Mammary epithelial cell (primary cell): ENCODE measurements at regions of chr4 and their contacts with region 1.

Region 1: DNA sequence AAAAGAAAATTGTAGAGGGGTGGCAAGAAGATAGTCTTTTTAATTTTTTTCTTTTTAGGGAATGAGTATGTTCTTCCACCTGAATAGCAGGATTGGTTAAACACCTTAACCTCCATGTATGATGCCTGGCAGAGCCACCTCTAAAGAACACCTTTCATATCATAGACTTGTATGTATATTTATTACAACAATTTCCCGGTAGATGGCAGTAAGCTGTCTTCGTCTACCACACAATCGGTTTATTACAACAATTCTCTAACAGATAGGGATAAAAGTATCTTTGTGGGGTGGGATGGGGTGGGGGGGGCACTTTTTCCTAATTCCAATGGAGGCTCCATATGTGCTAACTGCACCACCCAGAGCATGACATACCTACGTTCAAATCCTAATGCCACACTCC is 255.6 kb downstream of the LDB2 start:
- DNase-seq: no peak
- H3K4me3 ChIP-seq: no peak overlapping the region
- H3K27ac ChIP-seq: no peak overlapping the region
- H3K4me1 ChIP-seq: no peaks in the 10 kb centered on the region
- H3K27me3 ChIP-seq: no peaks in the 10 kb centered on the region
- CTCF ChIP-seq: peak; percentile 4 to 37

Region 2: DNA sequence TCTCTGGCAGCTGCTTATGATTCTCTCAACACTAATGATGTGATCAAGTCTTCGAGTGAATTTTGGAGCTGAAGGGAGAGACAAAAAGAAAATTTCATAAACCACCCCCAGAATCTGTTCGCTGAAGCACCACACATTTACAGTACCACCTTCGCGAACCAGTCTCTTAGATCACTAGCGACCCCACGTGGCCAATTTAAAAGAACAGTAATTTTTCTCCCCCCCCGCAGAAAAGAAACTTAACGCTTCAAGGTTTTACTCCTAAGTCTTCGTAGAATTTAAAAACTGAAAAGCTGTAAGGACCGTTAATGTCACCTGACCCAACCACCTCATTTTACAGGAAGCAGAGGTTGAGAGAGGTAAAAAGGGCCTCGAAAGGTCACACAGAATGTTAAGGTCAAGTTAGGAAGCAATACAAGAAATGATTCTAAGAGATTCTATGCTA is 681.5 kb after region 1 on chr4:
- CTCF ChIA-PET with region 1: no interaction called
- dilution Hi-C with region 1: no loop called
- in situ Hi-C with region 1: no loop called
- intact Hi-C with region 1: loop called (anchors 1 kb)
- DNase-seq: no peak
- H3K4me3 ChIP-seq: no peak overlapping the region
- H3K27ac ChIP-seq: no peak overlapping the region
- H3K4me1 ChIP-seq: no peaks in the 10 kb centered on the region
- H3K27me3 ChIP-seq: no peaks in the 10 kb centered on the region
- CTCF ChIP-seq: peak; percentile 40 to 54

Region 3: GRCh38 chr4:17447675-17448298 is 804.9 kb after region 1 on chr4:
- CTCF ChIA-PET with region 1: interaction called, 3 read pairs
- dilution Hi-C with region 1: no loop called
- in situ Hi-C with region 1: no loop called
- intact Hi-C with region 1: loop called (anchors 1 kb)
- DNase-seq: peak; percentile 51
- H3K4me3 ChIP-seq: no peak overlapping the region
- H3K27ac ChIP-seq: no peak overlapping the region
- H3K4me1 ChIP-seq: no peaks in the 10 kb centered on the region
- H3K27me3 ChIP-seq: no peaks in the 10 kb centered on the region
- CTCF ChIP-seq: peak; percentile 71 to 81